A549 (cell line): ENCODE measurements at regions of chr5 and their contacts with region 1.

Region 1: DNA sequence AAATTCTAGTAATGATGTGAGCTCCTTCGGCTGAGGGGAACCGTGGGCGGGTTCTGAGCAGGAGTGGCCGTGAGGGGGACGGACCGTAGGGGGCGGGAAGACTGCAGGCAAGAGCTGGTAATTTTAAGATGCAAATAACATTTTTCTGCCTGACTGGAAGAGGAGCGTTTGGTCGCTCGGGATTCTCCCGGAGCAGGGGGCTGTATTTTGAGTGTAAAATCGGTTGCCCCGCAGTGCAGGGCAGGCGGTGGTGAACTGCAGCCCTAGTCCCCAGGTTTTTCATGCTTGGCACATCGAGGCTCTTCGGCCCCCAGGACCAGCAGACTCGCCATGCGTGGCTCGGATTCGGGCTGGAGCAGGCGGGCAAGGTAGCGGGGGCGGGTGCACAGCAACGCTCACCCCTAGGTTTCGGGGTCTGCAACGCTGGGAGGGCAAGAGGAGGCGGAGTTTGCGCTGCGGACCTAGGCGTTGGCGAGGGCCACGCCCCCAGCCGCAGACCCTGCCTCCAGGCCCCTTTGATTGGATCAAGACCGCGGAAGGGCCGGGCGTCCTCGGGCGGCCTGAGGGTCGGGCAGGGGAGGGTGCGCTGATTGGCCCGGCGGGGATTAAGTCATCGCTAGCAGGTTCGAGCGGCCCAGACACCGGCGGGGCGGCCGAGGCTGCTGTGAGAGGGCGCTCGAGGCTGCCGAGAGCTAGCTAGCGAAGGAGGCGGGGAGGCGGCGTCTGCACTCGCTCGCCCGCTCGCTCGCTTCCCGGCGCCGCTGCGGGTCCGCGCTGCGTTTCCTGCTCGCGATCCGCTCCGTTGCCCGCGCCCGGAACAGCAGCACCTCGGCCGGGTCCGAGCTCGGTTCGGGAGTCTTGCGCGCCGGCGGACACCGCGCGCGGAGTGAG is at the start of gene ARHGAP26:
- DNase-seq: peak; percentile 93 to 95
- ATAC-seq: peak; percentile 91 to 98
- H3K4me3 ChIP-seq: peak within 1 kb of the TSS; percentile 74
- H3K27ac ChIP-seq: peak within 1 kb of the TSS; percentile 72 to 86
- H3K4me1 ChIP-seq: peaks cover 21% of the 10 kb centered on the region; the same call in 2 of the 3 replicates
- CTCF ChIP-seq: no peak; the same call in 1 of the 3 replicates
- EP300 ChIP-seq: no peak
- POLR2A ChIP-seq: peak; percentile 93
- RAD21 ChIP-seq: peak; percentile 52 to 66
- polyA plus RNA-seq, gene ARHGAP26: 19.1 and 29.8 TPM in 2 replicates

Region 2: GRCh38 chr5:142680605-142681299 is 89.2 kb before region 1 on chr5:
- CTCF ChIA-PET with region 1: no interaction called
- POLR2A ChIA-PET with region 1: no interaction called
- DNase-seq: peak; percentile 75 to 78
- ATAC-seq: peak; percentile 77 to 78
- H3K4me3 ChIP-seq: no peak overlapping the region
- H3K27ac ChIP-seq: peak overlapping the region; percentile 29 to 69; a peak in 5 of 6 replicates
- H3K4me1 ChIP-seq: peaks cover 20% of the 10 kb centered on the region
- CTCF ChIP-seq: no peak
- EP300 ChIP-seq: no peak
- POLR2A ChIP-seq: no peak
- RAD21 ChIP-seq: no peak

Region 3: DNA sequence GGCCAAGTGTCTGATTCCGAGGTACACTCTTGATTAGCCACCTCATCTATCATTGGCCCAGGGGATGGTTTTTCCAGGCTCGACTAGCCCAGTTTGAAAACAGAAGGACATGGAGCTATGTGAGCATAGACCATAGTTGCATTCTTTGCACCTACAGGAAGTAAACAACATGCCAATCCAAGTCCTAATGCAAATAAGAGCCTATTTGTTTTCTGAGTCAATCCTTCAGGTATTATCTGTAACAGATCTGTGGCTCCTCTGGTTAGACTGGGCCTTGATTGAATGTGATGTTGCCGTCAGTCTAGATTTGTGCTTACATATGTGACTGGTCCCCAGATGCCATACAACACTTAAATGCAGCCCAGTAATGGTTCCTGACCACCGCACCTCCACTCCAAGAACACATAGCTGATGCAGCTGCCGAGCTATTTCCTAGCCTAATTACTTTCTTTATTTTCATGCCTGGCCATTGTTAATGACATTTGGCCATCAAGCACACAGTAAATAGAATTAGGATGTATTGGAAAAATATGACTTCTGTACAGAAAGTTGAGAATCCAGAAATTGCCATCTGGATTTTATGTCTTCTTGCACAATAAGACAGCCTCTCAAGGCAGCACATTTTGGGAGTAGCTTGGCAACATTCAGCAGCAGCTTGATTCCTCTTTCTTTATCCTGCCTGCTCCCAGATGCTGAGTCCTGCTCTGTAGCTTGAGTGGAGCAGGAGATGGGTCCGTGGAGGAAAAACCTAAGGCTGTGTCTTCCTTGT is 29.3 kb before region 1 on chr5:
- CTCF ChIA-PET with region 1: interaction called, 12 read pairs
- POLR2A ChIA-PET with region 1: no interaction called
- DNase-seq: peak in 1 of 2 experiments; percentile 41
- ATAC-seq: peak; percentile 40 to 83; a peak in 3 of 6 replicates
- H3K4me3 ChIP-seq: no peak overlapping the region
- H3K27ac ChIP-seq: no peak overlapping the region
- H3K4me1 ChIP-seq: peaks cover 10% of the 10 kb centered on the region
- CTCF ChIP-seq: no peak
- EP300 ChIP-seq: no peak
- POLR2A ChIP-seq: no peak
- RAD21 ChIP-seq: no peak

Region 4: DNA sequence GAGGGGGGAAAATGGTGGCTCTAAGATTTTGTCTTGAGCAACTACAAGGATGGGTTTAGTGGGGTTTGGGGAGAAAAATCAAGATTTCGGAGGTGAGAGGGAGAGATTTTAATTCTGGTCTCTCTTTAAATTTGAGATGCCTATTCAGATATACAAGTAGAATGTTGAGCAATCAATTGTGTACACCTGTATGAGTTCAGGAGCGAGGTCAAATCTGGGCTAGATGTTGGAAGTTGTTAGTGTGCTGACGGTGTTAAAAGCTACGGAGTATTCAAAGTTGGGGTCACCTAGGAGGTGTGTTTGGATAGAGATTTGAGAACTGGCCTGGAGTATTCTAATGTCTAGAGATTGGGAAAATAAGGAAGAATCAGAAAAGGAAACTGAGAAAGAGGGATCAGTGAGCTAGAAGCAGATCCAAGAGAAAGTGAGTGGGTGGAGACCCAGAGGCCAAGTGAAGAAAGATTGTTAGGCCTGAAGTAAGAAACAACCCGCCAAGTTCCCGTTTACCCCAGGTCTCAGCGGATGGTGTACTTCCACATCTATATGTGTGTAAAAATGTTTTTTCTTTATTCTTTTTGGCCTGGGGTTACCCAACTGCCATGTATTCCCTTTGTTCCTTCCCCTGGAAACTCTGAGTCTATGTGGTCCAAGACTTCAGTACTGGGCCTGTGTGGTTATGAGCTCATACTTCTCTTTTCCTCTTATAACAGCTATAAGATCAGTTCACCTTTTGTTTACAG is 11.8 kb before region 1 on chr5:
- CTCF ChIA-PET with region 1: interaction called, 10 read pairs
- POLR2A ChIA-PET with region 1: interaction called, 4 read pairs
- DNase-seq: no peak
- ATAC-seq: no peak
- H3K4me3 ChIP-seq: no peak overlapping the region
- H3K27ac ChIP-seq: no peak overlapping the region
- H3K4me1 ChIP-seq: peaks cover 5% of the 10 kb centered on the region; the same call in 1 of the 3 replicates
- CTCF ChIP-seq: no peak
- EP300 ChIP-seq: no peak
- POLR2A ChIP-seq: no peak
- RAD21 ChIP-seq: no peak

Region 5: GRCh38 chr5:142798099-142798770 is 28.2 kb after region 1 on chr5:
- CTCF ChIA-PET with region 1: interaction called, 10 read pairs
- POLR2A ChIA-PET with region 1: interaction called, 3 read pairs
- DNase-seq: no peak
- ATAC-seq: no peak
- H3K4me3 ChIP-seq: no peak overlapping the region
- H3K27ac ChIP-seq: no peak overlapping the region
- H3K4me1 ChIP-seq: peaks cover 54% of the 10 kb centered on the region
- CTCF ChIP-seq: no peak
- EP300 ChIP-seq: no peak
- POLR2A ChIP-seq: no peak
- RAD21 ChIP-seq: no peak

Region 6: GRCh38 chr5:142881076-142881783 is 111.2 kb after region 1 on chr5:
- CTCF ChIA-PET with region 1: interaction called, 156 read pairs
- POLR2A ChIA-PET with region 1: no interaction called
- DNase-seq: no peak
- ATAC-seq: peak in 1 of 2 experiments; percentile 45; a peak in 2 of 6 replicates
- H3K4me3 ChIP-seq: no peak overlapping the region
- H3K27ac ChIP-seq: no peak overlapping the region
- H3K4me1 ChIP-seq: peaks cover 29% of the 10 kb centered on the region
- CTCF ChIP-seq: no peak
- EP300 ChIP-seq: no peak
- POLR2A ChIP-seq: no peak
- RAD21 ChIP-seq: no peak